PC-3 (cell line): ENCODE measurements at regions of chr1 and their contacts with region 1.

Region 1: GRCh38 chr1:223670458-223671168 is 5.1 kb upstream of the CAPN8 start:
- DNase-seq: peak; percentile 77
- ATAC-seq: peak; percentile 61
- H3K4me3 ChIP-seq: no peak overlapping the region
- H3K27ac ChIP-seq: no peak overlapping the region
- H3K4me1 ChIP-seq: peaks cover 42% of the 10 kb centered on the region
- H3K27me3 ChIP-seq: no peaks in the 10 kb centered on the region
- CTCF ChIP-seq: peak; percentile 94

Region 2: GRCh38 chr1:223621312-223621734 is 49.3 kb before region 1 on chr1:
- CTCF ChIA-PET with region 1: no interaction called
- POLR2A ChIA-PET with region 1: interaction called, 17 read pairs
- intact Hi-C with region 1: no loop called
- DNase-seq: no peak
- ATAC-seq: no peak
- H3K4me3 ChIP-seq: no peak overlapping the region
- H3K27ac ChIP-seq: no peak overlapping the region
- H3K4me1 ChIP-seq: no peaks in the 10 kb centered on the region
- H3K27me3 ChIP-seq: no peaks in the 10 kb centered on the region
- CTCF ChIP-seq: no peak

Region 3: GRCh38 chr1:223654083-223654482 is 16.5 kb before region 1 on chr1:
- CTCF ChIA-PET with region 1: interaction called, 3 read pairs
- POLR2A ChIA-PET with region 1: no interaction called
- intact Hi-C with region 1: loop called (anchors 1 kb)
- DNase-seq: peak; percentile 85
- ATAC-seq: peak; percentile 71
- H3K4me3 ChIP-seq: peak overlapping the region; percentile 12; the same call in 1 of the 2 replicates
- H3K27ac ChIP-seq: peak overlapping the region; percentile 86
- H3K4me1 ChIP-seq: peaks cover 47% of the 10 kb centered on the region
- H3K27me3 ChIP-seq: no peaks in the 10 kb centered on the region
- CTCF ChIP-seq: 0 out of 2 replicates have a peak, but pooled peaks have one; percentile 19